Right lobe of liver (tissue), 6 donors: ENCODE measurements at regions of chr9 and their contacts with region 1.

Region 1: DNA sequence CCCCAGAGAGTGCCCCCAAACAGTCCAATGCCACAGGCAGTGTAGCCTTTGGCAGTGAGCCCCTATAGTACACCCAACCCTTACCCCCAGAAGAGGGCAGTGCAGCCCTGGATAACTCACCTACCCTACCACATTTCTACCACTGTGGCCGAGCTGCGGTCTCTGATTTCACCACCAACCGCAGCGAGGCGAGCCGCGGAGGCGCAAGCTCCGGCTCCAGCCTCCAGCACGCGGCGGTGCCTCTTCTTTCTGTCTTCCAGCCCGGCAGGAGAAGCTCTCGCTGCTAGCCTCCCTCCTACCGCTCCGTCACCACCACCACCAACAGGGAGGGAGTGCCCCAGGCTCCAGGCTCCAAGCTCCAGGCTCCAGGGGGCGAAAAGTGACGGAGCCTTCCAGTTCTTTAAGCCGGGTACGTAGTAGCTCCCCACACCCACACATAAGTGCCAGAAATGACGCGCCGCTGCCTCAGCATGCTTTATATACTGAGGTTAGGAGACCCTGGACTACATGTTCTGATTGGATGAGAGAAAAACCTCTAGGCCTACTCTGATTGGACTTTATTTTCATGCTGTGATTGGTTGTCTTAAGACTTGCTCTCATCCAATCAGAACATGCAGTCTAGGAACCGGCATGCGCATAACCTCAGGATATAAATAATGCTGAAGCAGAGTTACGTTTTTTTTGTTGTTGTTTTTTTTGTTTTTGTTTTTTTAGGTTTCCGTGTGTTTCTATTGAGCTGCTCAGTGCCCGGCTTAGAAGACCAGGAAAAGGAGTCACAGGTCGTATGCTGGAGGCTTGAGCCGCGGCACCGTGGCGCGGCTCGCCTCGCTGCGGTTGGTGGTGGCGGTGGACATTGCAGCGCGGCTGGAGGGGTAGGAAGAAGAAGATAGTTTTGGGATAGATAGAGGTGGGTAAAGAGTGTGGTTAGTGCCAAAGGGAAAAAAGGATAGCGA is at the start of gene PCAT7:
- DNase-seq: peak; percentile 77 to 86 (median 78)
- ATAC-seq: peak; percentile 91 to 96 (median 93)
- H3K4me3 ChIP-seq: peak within 1 kb of the TSS; percentile 51 to 71 (median 59)
- H3K27ac ChIP-seq: peak within 1 kb of the TSS; percentile 69 to 89 (median 87)
- H3K4me1 ChIP-seq: peaks cover 0 to 6% (median 3%) of the 10 kb centered on the region in 4 donors
- H3K27me3 ChIP-seq: no peaks in the 10 kb centered on the region
- CTCF ChIP-seq: peak; percentile 43 to 82 (median 53)
- POLR2A ChIP-seq: peak; percentile 77
- total RNA-seq, gene PCAT7: 0.37 to 3.1 (median 0.96) TPM

Region 2: GRCh38 chr9:94603259-94604160 is 48.8 kb after region 1 on chr9:
- intact Hi-C with region 1: loop called in 1 of 2 experiments (anchors 5 kb)
- DNase-seq: peak; percentile 61 to 84 (median 72)
- ATAC-seq: peak; percentile 57 to 78 (median 70)
- H3K4me3 ChIP-seq: no peak overlapping the region
- H3K27ac ChIP-seq: peak overlapping the region in 1 of 3 donors; percentile 50
- H3K4me1 ChIP-seq: peaks cover 0 to 33% (median 14%) of the 10 kb centered on the region in 4 donors
- H3K27me3 ChIP-seq: no peaks in the 10 kb centered on the region
- CTCF ChIP-seq: peak; percentile 31 to 72 (median 54)
- POLR2A ChIP-seq: no peak

Region 3: DNA sequence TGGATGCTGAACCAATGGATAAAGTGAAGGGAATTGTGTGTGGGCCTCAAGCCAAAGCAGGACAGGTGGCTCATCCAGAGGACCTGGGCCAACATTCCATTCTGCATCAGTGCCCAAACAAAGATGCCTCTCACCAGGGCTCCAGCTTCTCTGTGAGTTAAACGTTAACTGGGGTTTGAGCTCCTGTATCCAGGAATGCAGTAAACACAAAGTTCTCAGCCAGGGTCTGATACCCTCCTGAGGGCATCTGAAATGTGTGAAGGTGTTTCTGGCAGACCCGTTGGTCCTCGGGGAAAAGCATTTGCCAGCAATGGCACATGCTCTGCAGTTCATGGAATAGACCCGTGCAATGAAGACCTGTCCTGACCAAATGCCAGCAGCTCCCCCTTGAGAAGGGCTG is 137.9 kb after region 1 on chr9:
- intact Hi-C with region 1: no loop called
- DNase-seq: peak; percentile 61 to 85 (median 71)
- ATAC-seq: peak; percentile 99
- H3K4me3 ChIP-seq: no peak overlapping the region
- H3K27ac ChIP-seq: no peak overlapping the region
- H3K4me1 ChIP-seq: peaks cover 0 to 8% (median 3%) of the 10 kb centered on the region in 4 donors
- H3K27me3 ChIP-seq: no peaks in the 10 kb centered on the region
- CTCF ChIP-seq: no peak
- POLR2A ChIP-seq: no peak